Heart left ventricle (tissue), 16 donors: ENCODE measurements at regions of chr9 and their contacts with region 1.

Region 1: GRCh38 chr9:123131258-123131657 is 97.8 kb downstream of the GPR21 start:
- DNase-seq: no peak
- ATAC-seq: no peak
- H3K4me3 ChIP-seq: no peak overlapping the region
- H3K27ac ChIP-seq: no peak overlapping the region
- H3K4me1 ChIP-seq: no peaks in the 10 kb centered on the region
- H3K27me3 ChIP-seq: no peaks in the 10 kb centered on the region
- CTCF ChIP-seq: no peak
- POLR2A ChIP-seq: no peak

Region 2: GRCh38 chr9:122445155-122445749 is 686.0 kb before region 1 on chr9:
- intact Hi-C with region 1: no loop called
- DNase-seq: no peak
- ATAC-seq: peak in 1 of 4 donors; percentile 77
- H3K4me3 ChIP-seq: no peak overlapping the region
- H3K27ac ChIP-seq: no peak overlapping the region
- H3K4me1 ChIP-seq: no peaks in the 10 kb centered on the region
- H3K27me3 ChIP-seq: peaks cover 0 to 3% (median 0%) of the 10 kb centered on the region in 9 donors
- CTCF ChIP-seq: no peak
- POLR2A ChIP-seq: no peak

Region 3: DNA sequence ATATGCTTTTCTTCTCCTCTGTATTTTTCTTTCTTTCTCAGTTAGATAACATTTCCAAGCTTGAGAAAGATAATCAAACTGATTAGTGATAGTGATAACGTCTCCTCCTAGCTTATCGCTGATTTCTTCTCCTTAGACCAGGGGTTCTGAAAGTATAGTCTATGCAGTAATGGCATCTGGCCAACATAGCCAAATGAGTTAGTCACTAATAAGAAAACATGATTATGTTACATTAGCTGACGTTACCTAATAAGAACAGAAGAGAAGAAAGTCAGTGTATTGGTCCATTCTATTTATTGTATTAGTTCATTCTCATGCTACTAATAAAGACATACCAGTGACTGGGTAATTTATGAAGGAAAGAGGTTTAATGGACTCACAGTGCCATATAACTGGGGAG is 26.0 kb after region 1 on chr9:
- intact Hi-C with region 1: no loop called
- DNase-seq: no peak
- ATAC-seq: no peak
- H3K4me3 ChIP-seq: no peak overlapping the region
- H3K27ac ChIP-seq: no peak overlapping the region
- H3K4me1 ChIP-seq: peaks cover 0 to 2% (median 0%) of the 10 kb centered on the region in 12 donors
- H3K27me3 ChIP-seq: no peaks in the 10 kb centered on the region
- CTCF ChIP-seq: no peak
- POLR2A ChIP-seq: no peak

Region 4: GRCh38 chr9:123187131-123187530 is 55.9 kb after region 1 on chr9:
- intact Hi-C with region 1: loop called in 1 of 10 experiments (anchors 10 kb)
- DNase-seq: no peak
- ATAC-seq: no peak
- H3K4me3 ChIP-seq: no peak overlapping the region
- H3K27ac ChIP-seq: no peak overlapping the region
- H3K4me1 ChIP-seq: peaks cover 0 to 7% (median 0%) of the 10 kb centered on the region in 12 donors
- H3K27me3 ChIP-seq: no peaks in the 10 kb centered on the region
- CTCF ChIP-seq: no peak
- POLR2A ChIP-seq: no peak

Region 5: GRCh38 chr9:123208626-123209174 is 77.4 kb after region 1 on chr9:
- intact Hi-C with region 1: no loop called
- DNase-seq: no peak
- ATAC-seq: peak; percentile 38 to 71 (median 62)
- H3K4me3 ChIP-seq: no peak overlapping the region
- H3K27ac ChIP-seq: no peak overlapping the region
- H3K4me1 ChIP-seq: peaks cover 0 to 7% (median 0%) of the 10 kb centered on the region in 12 donors
- H3K27me3 ChIP-seq: no peaks in the 10 kb centered on the region
- CTCF ChIP-seq: no peak
- POLR2A ChIP-seq: no peak

Region 6: GRCh38 chr9:123964761-123965160 is 833.5 kb after region 1 on chr9:
- intact Hi-C with region 1: no loop called
- DNase-seq: no peak
- ATAC-seq: no peak
- H3K4me3 ChIP-seq: no peak overlapping the region
- H3K27ac ChIP-seq: no peak overlapping the region
- H3K4me1 ChIP-seq: no peaks in the 10 kb centered on the region
- H3K27me3 ChIP-seq: peaks cover 0 to 34% (median 10%) of the 10 kb centered on the region in 9 donors
- CTCF ChIP-seq: no peak
- POLR2A ChIP-seq: no peak